ENCODE measurements at regions of chr7 and their contacts with region 1.

Region 1: DNA sequence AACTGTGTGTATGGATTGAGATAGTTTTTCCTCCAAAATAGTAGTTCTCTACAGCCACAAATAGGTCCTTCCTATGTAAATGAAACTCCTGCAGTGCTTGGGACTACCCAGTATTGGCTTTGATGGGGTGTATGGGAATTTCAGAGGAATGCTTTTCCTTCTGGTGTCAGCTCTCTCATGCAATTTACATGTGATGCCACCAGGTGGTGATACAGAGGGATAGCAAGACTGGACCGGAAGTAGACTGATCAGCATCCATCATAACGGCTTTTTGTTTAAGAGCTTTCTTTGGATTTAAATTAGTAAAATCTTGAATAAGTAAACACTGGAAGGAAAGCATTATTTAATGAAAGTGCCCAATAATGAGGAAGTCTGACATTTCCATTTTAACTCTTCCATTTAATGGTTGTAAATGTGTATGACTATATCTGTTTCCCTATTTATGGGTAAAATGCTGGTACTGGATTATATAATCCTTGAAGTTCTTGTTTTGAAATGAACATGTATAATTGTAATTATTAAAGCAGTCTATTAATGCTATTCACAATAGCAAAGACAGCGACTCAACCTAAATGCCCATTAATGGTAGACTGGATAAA is 22.7 kb downstream of the DYNC1I1 start:
- DNase-seq: no peak
- H3K4me3 ChIP-seq: no peak overlapping the region
- H3K27ac ChIP-seq: no peak overlapping the region
- H3K4me1 ChIP-seq: no peaks in the 10 kb centered on the region
- H3K27me3 ChIP-seq: peaks cover 10 to 22% (median 17%) of the 10 kb centered on the region in 4 experiments
- CTCF ChIP-seq: peak in 2 of 3 experiments; percentile 66 to 76; a peak in 3 of 4 replicates
- EP300 ChIP-seq: no peak
- POLR2A ChIP-seq: no peak
- RAD21 ChIP-seq: peak; percentile 59 to 70

Region 2: DNA sequence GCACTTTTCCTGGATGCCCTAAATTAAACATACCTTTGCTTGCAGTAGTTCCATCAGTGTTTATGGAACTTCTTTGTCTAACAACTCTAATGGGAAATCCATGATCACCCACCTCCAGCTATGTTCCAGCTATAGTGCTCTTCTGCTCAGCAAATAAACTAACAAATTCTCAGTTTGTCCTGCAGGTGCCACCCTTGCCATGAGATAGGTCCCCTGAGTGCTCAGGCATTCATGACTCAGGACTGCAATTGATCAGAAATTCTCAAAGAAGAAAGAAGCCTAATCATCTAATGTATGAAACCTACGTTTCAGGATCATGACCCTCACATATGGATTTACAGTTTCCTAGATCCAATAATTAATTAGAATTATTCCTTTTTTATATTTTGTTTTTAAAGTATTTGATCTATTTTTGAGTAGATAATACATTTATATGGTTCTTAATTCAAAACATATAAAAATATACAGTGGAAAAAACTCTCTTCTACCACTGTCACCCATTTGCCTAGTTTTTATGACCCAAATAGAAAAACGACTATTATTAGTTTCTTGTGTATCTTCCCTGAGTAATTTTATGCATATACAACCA is 71.3 kb before region 1 on chr7:
- CTCF ChIA-PET with region 1: interaction called, 23 read pairs
- POLR2A ChIA-PET with region 1: no interaction called
- DNase-seq: peak; percentile 25 to 52
- H3K4me3 ChIP-seq: no peak overlapping the region
- H3K27ac ChIP-seq: no peak overlapping the region
- H3K4me1 ChIP-seq: peaks cover 0 to 2% (median 0%) of the 10 kb centered on the region in 4 experiments; a peak in 1 of 7 replicates
- H3K27me3 ChIP-seq: no peaks in the 10 kb centered on the region; a peak in 1 of 7 replicates
- CTCF ChIP-seq: peak; percentile 23 to 80 (median 61)
- EP300 ChIP-seq: no peak
- POLR2A ChIP-seq: no peak
- RAD21 ChIP-seq: peak; percentile 92 to 94

Region 3: GRCh38 chr7:95772298-95772770 is 22.7 kb before region 1 on chr7 and contains the start of gene DYNC1I1:
- CTCF ChIA-PET with region 1: interaction called, 56 read pairs
- POLR2A ChIA-PET with region 1: no interaction called
- DNase-seq: no peak
- H3K4me3 ChIP-seq: peak within 1 kb of the TSS; percentile 38 to 69 (median 49)
- H3K27ac ChIP-seq: no peak within 1 kb of the TSS
- H3K4me1 ChIP-seq: peaks cover 0 to 9% (median 3%) of the 10 kb centered on the region in 4 experiments; a peak in 5 of 7 replicates
- H3K27me3 ChIP-seq: peaks cover 4 to 22% (median 18%) of the 10 kb centered on the region in 4 experiments
- CTCF ChIP-seq: no peak
- EP300 ChIP-seq: no peak
- POLR2A ChIP-seq: no peak
- RAD21 ChIP-seq: 0 out of 4 replicates have a peak, but pooled peaks of 1 of the 2 experiments have one; percentile 4
- total RNA-seq, gene DYNC1I1: 0.58 and 1.2 TPM in 2 replicates

Region 4: GRCh38 chr7:95811846-95812445 is 16.9 kb after region 1 on chr7:
- CTCF ChIA-PET with region 1: interaction called, 14 read pairs
- POLR2A ChIA-PET with region 1: interaction called, 5 read pairs
- DNase-seq: no peak
- H3K4me3 ChIP-seq: no peak overlapping the region
- H3K27ac ChIP-seq: no peak overlapping the region
- H3K4me1 ChIP-seq: no peaks in the 10 kb centered on the region
- H3K27me3 ChIP-seq: no peaks in the 10 kb centered on the region
- CTCF ChIP-seq: no peak
- EP300 ChIP-seq: no peak
- POLR2A ChIP-seq: no peak
- RAD21 ChIP-seq: no peak

Region 5: GRCh38 chr7:95865716-95866371 is 70.8 kb after region 1 on chr7:
- CTCF ChIA-PET with region 1: interaction called, 79 read pairs
- POLR2A ChIA-PET with region 1: no interaction called
- DNase-seq: no peak
- H3K4me3 ChIP-seq: no peak overlapping the region
- H3K27ac ChIP-seq: no peak overlapping the region
- H3K4me1 ChIP-seq: peaks cover 0 to 3% (median 1%) of the 10 kb centered on the region in 4 experiments; a peak in 1 of 7 replicates
- H3K27me3 ChIP-seq: no peaks in the 10 kb centered on the region
- CTCF ChIP-seq: peak in 2 of 3 experiments; percentile 58 to 65; a peak in 2 of 4 replicates
- EP300 ChIP-seq: no peak
- POLR2A ChIP-seq: no peak
- RAD21 ChIP-seq: peak; percentile 78 to 79

Region 6: GRCh38 chr7:95886501-95887090 is 91.6 kb after region 1 on chr7:
- CTCF ChIA-PET with region 1: no interaction called
- POLR2A ChIA-PET with region 1: no interaction called
- DNase-seq: no peak
- H3K4me3 ChIP-seq: no peak overlapping the region
- H3K27ac ChIP-seq: no peak overlapping the region
- H3K4me1 ChIP-seq: no peaks in the 10 kb centered on the region
- H3K27me3 ChIP-seq: no peaks in the 10 kb centered on the region
- CTCF ChIP-seq: no peak
- EP300 ChIP-seq: no peak
- POLR2A ChIP-seq: no peak
- RAD21 ChIP-seq: no peak

Measured in H1 (cell line).